OCI-LY7 (cell line): ENCODE measurements at regions of chr9 and their contacts with region 1.

Region 1: GRCh38 chr9:1002678-1003077 is 26.2 kb downstream of the DMRT3 start:
- DNase-seq: no peak
- H3K4me3 ChIP-seq: no peak overlapping the region
- H3K27ac ChIP-seq: no peak overlapping the region
- H3K4me1 ChIP-seq: peaks cover 12% of the 10 kb centered on the region
- CTCF ChIP-seq: no peak

Region 2: DNA sequence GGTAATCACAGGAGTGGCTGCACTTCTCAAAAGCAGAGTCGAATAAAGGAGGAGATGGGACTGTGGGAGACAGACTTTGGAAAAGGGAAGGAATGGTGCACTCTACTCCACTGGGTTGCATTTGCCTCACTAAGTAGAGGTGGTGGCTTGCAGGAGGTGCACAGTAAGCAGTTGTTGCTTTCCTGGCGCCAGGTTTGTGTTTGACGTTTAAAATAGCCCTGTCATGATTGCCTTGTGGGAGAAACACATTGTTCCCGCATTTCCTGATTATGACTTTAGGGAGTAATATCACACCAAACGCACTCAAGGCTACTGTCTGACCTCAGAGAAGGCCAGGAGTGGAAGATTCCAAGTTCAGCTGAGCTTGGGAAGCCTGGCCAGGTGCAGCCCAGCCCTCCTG is 124.4 kb before region 1 on chr9:
- CTCF ChIA-PET with region 1: no interaction called
- POLR2A ChIA-PET with region 1: interaction called, 11 read pairs
- intact Hi-C with region 1: no loop called
- DNase-seq: no peak
- H3K4me3 ChIP-seq: no peak overlapping the region
- H3K27ac ChIP-seq: no peak overlapping the region
- H3K4me1 ChIP-seq: no peaks in the 10 kb centered on the region
- CTCF ChIP-seq: no peak

Region 3: DNA sequence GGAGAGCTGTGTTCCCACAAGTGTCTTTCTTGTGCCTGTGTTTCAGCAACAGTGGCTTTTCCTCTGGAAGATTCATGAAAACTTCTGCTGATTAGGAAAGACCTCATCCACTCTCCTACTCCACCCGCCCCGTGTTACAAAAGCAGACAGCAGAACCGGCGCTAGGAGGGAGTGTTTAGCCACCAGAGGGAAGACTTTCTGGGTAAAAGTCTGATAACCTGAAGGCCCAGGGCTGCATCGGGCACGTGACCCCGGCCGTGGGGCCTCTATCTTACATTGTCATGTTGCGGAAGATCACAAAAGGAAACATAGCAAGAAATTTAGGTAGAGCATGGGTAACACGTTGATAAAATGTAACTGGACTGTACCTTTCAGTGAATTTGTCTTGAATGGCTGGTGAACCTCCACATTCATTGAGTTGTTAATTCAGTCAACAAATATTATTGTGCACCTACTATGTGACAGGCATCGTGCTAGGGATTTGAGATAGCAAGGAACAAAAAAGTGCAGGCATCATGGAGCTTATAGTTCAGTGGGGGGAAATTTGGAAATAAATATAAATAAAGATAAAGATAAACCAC is 15.5 kb after region 1 on chr9:
- CTCF ChIA-PET with region 1: no interaction called
- POLR2A ChIA-PET with region 1: no interaction called
- intact Hi-C with region 1: no loop called
- DNase-seq: peak; percentile 61
- H3K4me3 ChIP-seq: no peak overlapping the region
- H3K27ac ChIP-seq: no peak overlapping the region
- H3K4me1 ChIP-seq: no peaks in the 10 kb centered on the region
- CTCF ChIP-seq: peak; percentile 76

Region 4: GRCh38 chr9:1383899-1384455 is 381.3 kb after region 1 on chr9:
- CTCF ChIA-PET with region 1: no interaction called
- POLR2A ChIA-PET with region 1: no interaction called
- intact Hi-C with region 1: no loop called
- DNase-seq: no peak
- H3K4me3 ChIP-seq: no peak overlapping the region
- H3K27ac ChIP-seq: no peak overlapping the region
- H3K4me1 ChIP-seq: no peaks in the 10 kb centered on the region
- CTCF ChIP-seq: no peak